Pancreas (tissue), 10 donors: ENCODE measurements at regions of chr3 and their contacts with region 1.

Region 1: GRCh38 chr3:187215460-187215859 is 18.2 kb downstream of the RTP1 start:
- DNase-seq: no peak
- ATAC-seq: no peak
- H3K4me3 ChIP-seq: no peak overlapping the region
- H3K27ac ChIP-seq: no peak overlapping the region
- H3K4me1 ChIP-seq: peaks cover 0 to 4% (median 0%) of the 10 kb centered on the region in 3 donors
- H3K27me3 ChIP-seq: no peaks in the 10 kb centered on the region
- CTCF ChIP-seq: no peak

Region 2: DNA sequence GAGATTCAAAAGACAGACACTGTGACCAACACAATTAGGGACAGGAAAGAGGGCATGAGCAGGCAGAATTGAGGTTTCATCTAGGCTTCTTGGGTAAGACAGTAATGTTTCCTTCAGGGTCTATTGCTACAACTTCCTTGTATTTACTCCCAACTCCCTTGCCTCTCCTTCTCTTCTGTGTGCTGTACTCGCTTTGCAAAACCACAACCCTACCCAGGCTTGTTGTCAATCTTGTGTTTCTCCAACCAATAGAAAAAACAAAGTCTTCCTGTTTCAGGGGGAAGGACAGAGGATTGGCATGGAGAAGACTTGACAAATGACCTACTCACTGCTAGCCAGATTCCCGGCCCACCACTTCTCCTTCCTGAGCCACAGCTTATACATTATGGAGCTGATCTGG is 112.4 kb after region 1 on chr3:
- intact Hi-C with region 1: loop called in 1 of 3 experiments (anchors 5 kb)
- DNase-seq: no peak
- ATAC-seq: no peak
- H3K4me3 ChIP-seq: no peak overlapping the region
- H3K27ac ChIP-seq: no peak overlapping the region
- H3K4me1 ChIP-seq: no peaks in the 10 kb centered on the region
- H3K27me3 ChIP-seq: no peaks in the 10 kb centered on the region
- CTCF ChIP-seq: no peak

Region 3: GRCh38 chr3:187450431-187451190 is 235.2 kb after region 1 on chr3:
- intact Hi-C with region 1: no loop called
- DNase-seq: no peak
- ATAC-seq: no peak
- H3K4me3 ChIP-seq: no peak overlapping the region
- H3K27ac ChIP-seq: no peak overlapping the region
- H3K4me1 ChIP-seq: no peaks in the 10 kb centered on the region
- H3K27me3 ChIP-seq: no peaks in the 10 kb centered on the region
- CTCF ChIP-seq: no peak